K562 (cell line): ENCODE measurements at regions of chr21 and their contacts with region 1.

Region 1: GRCh38 chr21:36209626-36210171 is 53.1 kb downstream of the DOP1B start:
- DNase-seq: peak; percentile 37 to 72 (median 41)
- ATAC-seq: peak; percentile 83
- H3K4me3 ChIP-seq: no peak overlapping the region
- H3K27ac ChIP-seq: no peak overlapping the region
- H3K4me1 ChIP-seq: no peaks in the 10 kb centered on the region
- H3K27me3 ChIP-seq: peaks cover 37 to 69% of the 10 kb centered on the region in 2 experiments
- CTCF ChIP-seq: peak; percentile 76 to 85 (median 78)
- EP300 ChIP-seq: no peak
- POLR2A ChIP-seq: no peak
- RAD21 ChIP-seq: peak; percentile 93 to 96

Region 2: GRCh38 chr21:36149788-36150711 is 59.6 kb before region 1 on chr21:
- CTCF ChIA-PET with region 1: interaction called, 21 read pairs
- POLR2A ChIA-PET with region 1: interaction called, 3 read pairs
- in situ Hi-C with region 1: loop called (anchors 5 kb)
- intact Hi-C with region 1: loop called (anchors 1 kb)
- DNase-seq: peak in 1 of 4 experiments; percentile 43
- ATAC-seq: peak; percentile 84
- H3K4me3 ChIP-seq: no peak overlapping the region
- H3K27ac ChIP-seq: peak overlapping the region; percentile 55; the same call in 1 of the 3 replicates
- H3K4me1 ChIP-seq: peaks cover 0 to 6% of the 10 kb centered on the region in 2 experiments; a peak in 3 of 5 replicates
- H3K27me3 ChIP-seq: peaks cover 0 to 6% of the 10 kb centered on the region in 2 experiments; a peak in 1 of 5 replicates
- CTCF ChIP-seq: no peak
- EP300 ChIP-seq: no peak
- POLR2A ChIP-seq: no peak
- RAD21 ChIP-seq: no peak

Region 3: DNA sequence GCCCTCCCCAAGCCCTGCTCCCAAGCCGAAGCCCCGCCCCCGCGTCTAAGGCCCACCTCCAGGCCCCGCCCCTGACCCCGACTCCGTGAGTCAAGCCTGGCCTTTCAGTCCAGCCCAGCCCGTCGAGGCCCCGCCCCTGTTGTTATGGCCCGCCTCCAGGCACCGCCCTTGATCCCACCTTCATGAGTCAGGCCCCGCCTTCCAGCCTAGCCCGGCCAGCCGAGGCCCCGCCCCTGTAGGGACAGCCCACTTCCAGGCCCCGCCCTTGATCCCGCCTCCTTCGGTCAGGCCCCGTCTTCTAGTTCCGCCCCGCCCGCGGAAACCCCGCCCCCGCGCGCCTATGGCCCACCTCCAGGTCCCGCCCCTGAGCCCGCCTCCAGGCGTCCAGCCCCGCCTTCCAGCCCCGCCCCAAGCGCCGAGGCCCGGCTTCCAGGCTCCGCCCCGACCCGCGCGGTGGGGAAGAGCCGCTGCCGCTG is 53.3 kb before region 1 on chr21:
- CTCF ChIA-PET with region 1: interaction called, 21 read pairs
- POLR2A ChIA-PET with region 1: interaction called, 3 read pairs
- in situ Hi-C with region 1: loop called (anchors 5 kb)
- intact Hi-C with region 1: loop called (anchors 1 kb)
- DNase-seq: peak; percentile 99
- ATAC-seq: peak; percentile 95
- H3K4me3 ChIP-seq: peak overlapping the region; percentile 76
- H3K27ac ChIP-seq: peak overlapping the region; percentile 49; the same call in 1 of the 3 replicates
- H3K4me1 ChIP-seq: peaks cover 11 to 19% of the 10 kb centered on the region in 2 experiments; a peak in 4 of 5 replicates
- H3K27me3 ChIP-seq: peaks cover 6 to 29% of the 10 kb centered on the region in 2 experiments; a peak in 4 of 5 replicates
- CTCF ChIP-seq: no peak
- EP300 ChIP-seq: no peak
- POLR2A ChIP-seq: no peak; the same call in 1 of the 2 replicates
- RAD21 ChIP-seq: no peak

Region 4: GRCh38 chr21:36369064-36369685 is 159.5 kb after region 1 on chr21:
- CTCF ChIA-PET with region 1: no interaction called
- POLR2A ChIA-PET with region 1: no interaction called
- in situ Hi-C with region 1: no loop called
- intact Hi-C with region 1: no loop called
- DNase-seq: no peak
- ATAC-seq: no peak
- H3K4me3 ChIP-seq: no peak overlapping the region
- H3K27ac ChIP-seq: no peak overlapping the region
- H3K4me1 ChIP-seq: no peaks in the 10 kb centered on the region
- H3K27me3 ChIP-seq: no peaks in the 10 kb centered on the region
- CTCF ChIP-seq: no peak
- EP300 ChIP-seq: no peak
- POLR2A ChIP-seq: no peak
- RAD21 ChIP-seq: no peak

Region 5: GRCh38 chr21:36385233-36386030 is 175.7 kb after region 1 on chr21 and contains the start of gene CHAF1B:
- CTCF ChIA-PET with region 1: no interaction called
- POLR2A ChIA-PET with region 1: no interaction called
- in situ Hi-C with region 1: no loop called
- intact Hi-C with region 1: no loop called
- DNase-seq: peak; percentile 89 to 99 (median 98)
- ATAC-seq: peak; percentile 96
- H3K4me3 ChIP-seq: peak within 1 kb of the TSS; percentile 95
- H3K27ac ChIP-seq: peak within 1 kb of the TSS; percentile 79
- H3K4me1 ChIP-seq: peaks cover 9 to 21% of the 10 kb centered on the region in 2 experiments; a peak in 4 of 5 replicates
- H3K27me3 ChIP-seq: no peaks in the 10 kb centered on the region
- CTCF ChIP-seq: no peak
- EP300 ChIP-seq: no peak
- POLR2A ChIP-seq: peak; percentile 68
- RAD21 ChIP-seq: no peak
- polyA plus RNA-seq, gene CHAF1B: 7.5 to 12.2 TPM